Activated CD4-positive, alpha-beta T cell treated with anti-CD3 and anti-CD28 coated beads for 36 hours (primary cell): ENCODE measurements at regions of chr9 and their contacts with region 1.

Region 1: DNA sequence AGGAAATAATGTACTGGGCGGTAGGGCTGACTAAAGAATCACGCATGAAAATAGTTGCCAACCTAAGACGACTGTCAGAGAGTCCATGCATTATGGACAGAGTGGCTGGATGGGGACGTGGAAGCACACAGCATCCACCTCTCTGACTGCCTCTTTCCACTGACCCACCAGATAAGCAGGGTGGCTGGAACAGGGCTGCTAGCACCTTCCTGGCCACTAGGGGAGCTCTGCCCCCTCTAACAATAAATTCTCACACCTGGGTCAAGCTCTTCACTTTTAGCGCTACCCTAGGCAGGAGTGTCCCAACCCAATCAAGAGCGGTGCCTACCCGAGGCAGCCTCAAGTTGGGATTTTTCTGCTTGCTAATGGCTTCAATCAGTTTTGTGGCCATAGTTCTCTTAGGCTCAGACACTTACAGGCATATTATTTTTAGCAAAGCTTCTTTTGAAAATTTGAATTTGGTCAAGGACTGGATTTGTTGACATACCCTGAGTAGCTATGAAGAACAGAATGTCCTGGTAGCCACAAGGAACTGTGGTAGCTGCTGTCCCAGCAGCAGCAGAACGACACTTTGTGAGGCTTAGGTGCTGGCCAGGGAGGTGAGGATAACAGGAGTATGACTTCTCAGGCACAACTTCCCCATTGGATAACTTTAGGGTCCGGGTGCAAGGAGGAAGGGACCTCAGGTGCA is 6.9 kb upstream of the TPM2 start:
- DNase-seq: peak; percentile 73
- ATAC-seq: peak; percentile 90
- H3K4me3 Mint-ChIP-seq: no peak overlapping the region
- H3K27ac Mint-ChIP-seq: no peak overlapping the region
- H3K4me1 Mint-ChIP-seq: peaks cover 1% of the 10 kb centered on the region
- H3K27me3 Mint-ChIP-seq: no peaks in the 10 kb centered on the region

Region 2: DNA sequence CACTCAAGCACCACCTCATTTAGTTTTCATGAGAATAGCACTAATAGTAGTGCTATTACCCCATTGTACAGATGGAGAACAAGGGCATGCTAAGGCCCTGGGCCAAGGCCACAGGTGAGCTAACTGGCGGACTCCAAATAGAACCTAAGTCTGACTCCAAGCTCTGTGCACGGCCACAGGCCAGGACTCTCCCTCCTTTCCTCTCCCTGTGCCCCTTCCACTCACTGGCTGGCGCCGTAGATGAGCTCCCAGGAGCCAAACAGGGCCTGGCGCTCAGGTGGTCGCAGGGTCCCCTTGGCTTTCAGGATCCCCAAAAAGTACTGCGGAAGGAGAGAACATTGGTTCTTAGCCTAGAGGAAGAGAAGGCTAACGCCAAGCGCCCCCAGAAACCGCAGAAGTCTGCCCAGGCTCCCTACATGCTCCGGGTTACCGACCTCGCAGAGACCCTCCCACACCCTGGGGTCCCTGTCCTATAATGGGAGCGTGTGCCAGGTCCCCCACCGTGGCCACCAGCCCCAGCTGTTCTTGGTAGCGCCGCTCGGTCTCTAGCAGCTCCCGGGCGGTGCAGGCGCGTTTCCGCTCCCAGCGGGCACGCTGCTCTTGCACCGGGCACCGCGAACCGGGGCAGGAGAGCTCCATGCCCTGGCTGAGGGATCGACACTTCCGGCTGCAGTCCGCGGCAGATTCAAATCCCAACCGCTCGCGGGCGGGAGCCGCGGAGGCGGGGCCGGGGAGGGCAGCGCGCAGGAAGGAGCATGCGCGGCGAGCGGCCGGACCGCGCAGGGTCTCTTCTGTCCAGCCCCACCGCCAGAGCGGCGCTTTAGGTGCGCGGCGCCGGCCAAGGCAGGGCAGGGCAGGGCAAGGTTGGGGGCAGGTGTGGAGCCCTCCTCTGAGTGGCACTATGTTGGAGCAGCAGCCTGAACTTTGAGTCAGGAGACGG is 31.9 kb before region 1 on chr9 and contains the start of gene ARHGEF39:
- CTCF ChIA-PET with region 1: interaction called, 23 read pairs
- POLR2A ChIA-PET with region 1: interaction called, 9 read pairs
- intact Hi-C with region 1: no loop called
- DNase-seq: peak; percentile 86
- ATAC-seq: peak; percentile 92
- H3K4me3 Mint-ChIP-seq: peak within 1 kb of the TSS; percentile 75
- H3K27ac Mint-ChIP-seq: peak within 1 kb of the TSS; percentile 59
- H3K4me1 Mint-ChIP-seq: peaks cover 47% of the 10 kb centered on the region
- H3K27me3 Mint-ChIP-seq: no peaks in the 10 kb centered on the region
- total RNA-seq, gene ARHGEF39: 19.1 to 23.1 TPM

Region 3: GRCh38 chr9:35675732-35676392 is 20.8 kb before region 1 on chr9:
- CTCF ChIA-PET with region 1: interaction called, 24 read pairs
- POLR2A ChIA-PET with region 1: interaction called, 3 read pairs
- intact Hi-C with region 1: no loop called
- DNase-seq: peak; percentile 63
- ATAC-seq: peak; percentile 74
- H3K4me3 Mint-ChIP-seq: peak overlapping the region; percentile 54
- H3K27ac Mint-ChIP-seq: no peak overlapping the region
- H3K4me1 Mint-ChIP-seq: peaks cover 10% of the 10 kb centered on the region
- H3K27me3 Mint-ChIP-seq: peaks cover 9% of the 10 kb centered on the region

Region 4: GRCh38 chr9:35685506-35685905 is 11.2 kb before region 1 on chr9:
- CTCF ChIA-PET with region 1: interaction called, 24 read pairs
- POLR2A ChIA-PET with region 1: interaction called, 3 read pairs
- intact Hi-C with region 1: no loop called
- DNase-seq: no peak
- ATAC-seq: no peak
- H3K4me3 Mint-ChIP-seq: no peak overlapping the region
- H3K27ac Mint-ChIP-seq: no peak overlapping the region
- H3K4me1 Mint-ChIP-seq: peaks cover 16% of the 10 kb centered on the region
- H3K27me3 Mint-ChIP-seq: no peaks in the 10 kb centered on the region

Region 5: GRCh38 chr9:35716230-35716629 is 19.6 kb after region 1 on chr9:
- CTCF ChIA-PET with region 1: interaction called, 22 read pairs
- POLR2A ChIA-PET with region 1: no interaction called
- intact Hi-C with region 1: no loop called
- DNase-seq: no peak
- ATAC-seq: no peak
- H3K4me3 Mint-ChIP-seq: no peak overlapping the region
- H3K27ac Mint-ChIP-seq: no peak overlapping the region
- H3K4me1 Mint-ChIP-seq: peaks cover 7% of the 10 kb centered on the region
- H3K27me3 Mint-ChIP-seq: no peaks in the 10 kb centered on the region